ENCODE measurements at regions of chr7 and their contacts with region 1.

Region 1: GRCh38 chr7:17663061-17663675 is 277.1 kb downstream of the SNX13 start:
- DNase-seq: peak; percentile 74
- H3K4me3 Mint-ChIP-seq: peak overlapping the region; percentile 16
- H3K27ac Mint-ChIP-seq: peak overlapping the region; percentile 40
- H3K4me1 Mint-ChIP-seq: peaks cover 21% of the 10 kb centered on the region
- H3K27me3 Mint-ChIP-seq: no peaks in the 10 kb centered on the region
- CTCF ChIP-seq: no peak

Region 2: GRCh38 chr7:17674166-17674961 is 11.2 kb after region 1 on chr7:
- CTCF ChIA-PET with region 1: interaction called, 4 read pairs
- POLR2A ChIA-PET with region 1: interaction called, 25 read pairs
- intact Hi-C with region 1: no loop called
- DNase-seq: peak; percentile 79
- H3K4me3 Mint-ChIP-seq: no peak overlapping the region
- H3K27ac Mint-ChIP-seq: peak overlapping the region; percentile 97
- H3K4me1 Mint-ChIP-seq: peaks cover 59% of the 10 kb centered on the region
- H3K27me3 Mint-ChIP-seq: no peaks in the 10 kb centered on the region
- CTCF ChIP-seq: no peak

Region 3: GRCh38 chr7:17680943-17681351 is 17.8 kb after region 1 on chr7:
- CTCF ChIA-PET with region 1: interaction called, 4 read pairs
- POLR2A ChIA-PET with region 1: interaction called, 25 read pairs
- intact Hi-C with region 1: no loop called
- DNase-seq: peak; percentile 41
- H3K4me3 Mint-ChIP-seq: peak overlapping the region; percentile 37
- H3K27ac Mint-ChIP-seq: peak overlapping the region; percentile 95
- H3K4me1 Mint-ChIP-seq: peaks cover 69% of the 10 kb centered on the region
- H3K27me3 Mint-ChIP-seq: no peaks in the 10 kb centered on the region
- CTCF ChIP-seq: peak; percentile 35

Measured in MCF 10A (cell line).